ENCODE measurements at regions of chr15 and their contacts with region 1.

Region 1: DNA sequence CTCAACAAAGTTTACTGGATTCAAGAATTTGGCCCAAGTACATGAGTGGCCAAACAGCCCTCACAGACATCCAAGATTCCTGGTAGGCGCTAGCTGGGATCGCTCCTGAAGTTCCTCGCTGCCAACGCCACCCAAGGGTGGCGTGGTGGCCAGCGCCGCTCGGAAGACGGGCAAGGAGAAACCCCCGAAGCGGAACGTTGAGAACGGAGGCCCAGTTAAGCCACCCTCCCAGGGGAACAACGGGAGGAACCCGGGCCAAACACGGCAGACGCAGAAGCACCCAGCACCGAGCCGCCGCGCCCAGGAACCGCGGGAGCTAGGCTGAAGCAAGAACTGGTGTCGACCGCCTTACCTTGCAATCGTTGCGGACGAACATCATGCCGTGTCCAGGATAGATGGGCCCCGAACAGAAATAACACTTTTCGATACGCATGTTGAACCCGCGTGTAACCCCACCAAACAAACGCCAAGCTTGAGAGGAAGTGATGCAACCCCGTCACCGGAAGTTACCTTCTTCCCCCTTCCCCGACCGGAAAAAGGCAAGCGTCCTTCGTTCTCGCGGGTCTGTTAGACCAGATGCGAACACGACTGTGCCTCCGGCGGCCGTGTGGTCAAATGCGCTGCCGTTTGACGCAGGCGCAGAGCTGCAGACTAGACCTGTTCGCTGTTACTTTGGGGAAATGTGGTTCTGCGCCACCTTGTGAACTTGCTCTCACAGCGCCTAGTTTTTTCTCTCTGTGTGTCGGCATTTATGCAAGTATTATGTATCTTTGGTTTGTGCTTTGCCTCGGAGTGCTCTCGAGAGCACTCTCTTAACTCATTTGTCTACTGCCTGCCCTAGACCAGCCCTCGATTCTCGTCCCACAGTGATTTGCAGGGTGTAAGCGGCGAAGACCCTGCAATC is at the start of gene RSL24D1:
- DNase-seq: peak; percentile 98
- H3K4me3 Mint-ChIP-seq: no peak within 1 kb of the TSS
- H3K27ac Mint-ChIP-seq: no peak within 1 kb of the TSS
- H3K4me1 Mint-ChIP-seq: peaks cover 16% of the 10 kb centered on the region
- H3K27me3 Mint-ChIP-seq: no peaks in the 10 kb centered on the region
- total RNA-seq, gene RSL24D1: 201 to 209 TPM

Region 2: GRCh38 chr15:53869044-53869805 is 1327.5 kb before region 1 on chr15:
- CTCF ChIA-PET with region 1: no interaction called
- intact Hi-C with region 1: no loop called
- DNase-seq: no peak
- H3K4me3 Mint-ChIP-seq: no peak overlapping the region
- H3K27ac Mint-ChIP-seq: no peak overlapping the region
- H3K4me1 Mint-ChIP-seq: no peaks in the 10 kb centered on the region
- H3K27me3 Mint-ChIP-seq: no peaks in the 10 kb centered on the region

Region 3: GRCh38 chr15:55031727-55032126 is 165.0 kb before region 1 on chr15:
- CTCF ChIA-PET with region 1: no interaction called
- intact Hi-C with region 1: no loop called
- DNase-seq: no peak
- H3K4me3 Mint-ChIP-seq: no peak overlapping the region
- H3K27ac Mint-ChIP-seq: no peak overlapping the region
- H3K4me1 Mint-ChIP-seq: no peaks in the 10 kb centered on the region
- H3K27me3 Mint-ChIP-seq: peaks cover 21% of the 10 kb centered on the region

Region 4: GRCh38 chr15:55179141-55179540 is 17.6 kb before region 1 on chr15:
- CTCF ChIA-PET with region 1: no interaction called
- intact Hi-C with region 1: loop called (anchors 2 kb)
- DNase-seq: no peak
- H3K4me3 Mint-ChIP-seq: no peak overlapping the region
- H3K27ac Mint-ChIP-seq: no peak overlapping the region
- H3K4me1 Mint-ChIP-seq: peaks cover 4% of the 10 kb centered on the region
- H3K27me3 Mint-ChIP-seq: no peaks in the 10 kb centered on the region

Region 5: GRCh38 chr15:55318588-55319494 is 122.1 kb after region 1 on chr15 and contains the starts of genes PIGB and PIGBOS1:
- CTCF ChIA-PET with region 1: interaction called, 3 read pairs
- intact Hi-C with region 1: loop called (anchors 1 kb)
- DNase-seq: peak; percentile 86
- H3K4me3 Mint-ChIP-seq: peak within 1 kb of the TSS; percentile 98
- H3K27ac Mint-ChIP-seq: peak within 1 kb of the TSS; percentile 93
- H3K4me1 Mint-ChIP-seq: peaks cover 51% of the 10 kb centered on the region
- H3K27me3 Mint-ChIP-seq: no peaks in the 10 kb centered on the region
- total RNA-seq, gene PIGB: 13.3 to 13.8 TPM
- total RNA-seq, gene PIGBOS1: 7.3 to 9.2 TPM

Region 6: DNA sequence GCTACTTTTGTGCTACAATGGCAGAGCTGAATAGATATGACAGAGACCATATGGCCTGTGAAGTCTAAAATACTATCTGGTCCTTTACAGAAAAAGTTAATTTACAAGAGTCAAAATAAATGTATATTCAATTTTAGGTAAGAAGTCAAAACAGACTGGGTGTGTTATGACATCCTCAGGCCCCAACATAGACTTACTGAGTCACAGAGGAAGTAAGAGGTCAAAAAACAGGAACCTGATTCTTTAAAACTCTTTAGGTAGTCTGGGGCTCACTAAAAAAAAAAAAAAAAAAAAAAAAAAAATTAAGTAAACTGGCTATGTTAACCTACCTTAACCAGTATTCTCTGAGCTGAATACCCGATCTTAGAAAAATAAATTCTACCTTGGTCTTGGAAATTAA is 298.2 kb after region 1 on chr15:
- CTCF ChIA-PET with region 1: no interaction called
- intact Hi-C with region 1: loop called (anchors 2 kb)
- DNase-seq: no peak
- H3K4me3 Mint-ChIP-seq: no peak overlapping the region
- H3K27ac Mint-ChIP-seq: no peak overlapping the region
- H3K4me1 Mint-ChIP-seq: peaks cover 8% of the 10 kb centered on the region
- H3K27me3 Mint-ChIP-seq: no peaks in the 10 kb centered on the region